A549 (cell line): ENCODE measurements at regions of chr17 and their contacts with region 1.

Region 1: GRCh38 chr17:28227316-28228125 is 91.5 kb upstream of the TMEM97 start:
- DNase-seq: peak; percentile 93 to 94
- ATAC-seq: peak; percentile 88 to 95
- H3K4me3 ChIP-seq: peak overlapping the region; percentile 58
- H3K27ac ChIP-seq: peak overlapping the region; percentile 83 to 84
- H3K4me1 ChIP-seq: peaks cover 14% of the 10 kb centered on the region; the same call in 2 of the 3 replicates
- CTCF ChIP-seq: no peak
- EP300 ChIP-seq: no peak
- POLR2A ChIP-seq: peak; percentile 68
- RAD21 ChIP-seq: no peak; a peak in 1 of 5 replicates

Region 2: DNA sequence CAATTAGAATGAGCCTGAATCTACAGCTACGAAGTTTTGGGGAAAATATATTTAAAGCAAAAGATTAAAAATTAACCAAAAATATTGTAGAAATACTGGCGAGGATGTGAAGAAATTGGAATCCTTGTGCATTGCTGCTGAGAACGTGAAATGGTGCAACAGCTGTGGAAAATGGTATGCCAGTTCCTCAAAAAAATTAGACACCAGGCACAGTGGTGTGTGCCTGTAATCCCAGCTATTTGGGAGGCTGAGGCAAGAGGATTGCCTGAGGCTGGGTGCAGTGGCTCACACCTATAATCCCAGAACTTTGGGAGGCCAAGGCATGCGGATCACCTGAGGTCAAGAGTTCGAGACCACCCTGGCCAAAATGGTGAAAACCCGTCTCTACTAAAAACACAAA is 28.4 kb before region 1 on chr17:
- CTCF ChIA-PET with region 1: no interaction called
- POLR2A ChIA-PET with region 1: no interaction called
- DNase-seq: no peak
- ATAC-seq: no peak
- H3K4me3 ChIP-seq: no peak overlapping the region
- H3K27ac ChIP-seq: no peak overlapping the region
- H3K4me1 ChIP-seq: no peaks in the 10 kb centered on the region
- CTCF ChIP-seq: no peak
- EP300 ChIP-seq: no peak
- POLR2A ChIP-seq: no peak
- RAD21 ChIP-seq: no peak

Region 3: DNA sequence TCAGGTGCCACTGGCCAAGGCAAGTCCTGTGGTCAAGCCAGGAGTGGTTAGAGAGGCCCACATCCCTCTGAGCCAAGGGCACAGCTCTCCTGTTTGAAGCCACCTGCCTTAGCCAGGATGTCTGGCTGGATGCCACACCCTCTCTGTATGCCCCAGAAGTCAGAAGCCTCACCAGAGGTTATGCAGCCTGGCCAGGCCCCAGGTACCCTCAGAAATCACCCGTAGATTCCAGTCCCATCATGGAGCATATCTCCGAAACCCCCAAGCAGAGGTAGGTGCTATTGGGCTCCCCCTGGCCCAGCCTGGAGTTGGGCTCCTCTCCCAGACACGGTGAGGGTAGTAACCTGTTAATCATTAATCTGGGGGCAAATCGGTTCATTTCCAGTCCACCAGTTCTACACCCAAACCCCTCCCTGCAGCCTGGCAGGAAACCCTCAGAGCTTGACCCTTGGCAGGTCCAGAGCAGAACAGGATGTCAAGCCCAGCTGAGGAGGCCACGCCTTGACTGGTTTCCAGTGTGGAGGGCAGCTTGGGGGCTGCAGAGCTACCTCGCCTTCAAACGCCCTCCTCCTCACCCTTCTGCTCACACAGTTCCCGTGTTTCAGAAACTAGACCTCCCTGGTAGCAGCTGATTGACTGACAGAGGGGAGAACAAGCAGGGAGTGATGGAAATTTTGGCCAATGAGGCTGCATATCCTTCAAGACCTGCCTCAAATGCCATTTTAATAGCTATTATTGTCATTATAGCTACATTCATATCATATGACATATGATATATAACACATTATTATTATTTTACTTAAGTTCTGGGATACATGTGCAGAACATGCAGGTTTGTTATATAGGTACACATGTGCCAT is 31.1 kb after region 1 on chr17:
- CTCF ChIA-PET with region 1: interaction called, 338 read pairs
- POLR2A ChIA-PET with region 1: no interaction called
- DNase-seq: peak in 1 of 2 experiments; percentile 36
- ATAC-seq: peak; percentile 35 to 40; a peak in 4 of 6 replicates
- H3K4me3 ChIP-seq: no peak overlapping the region
- H3K27ac ChIP-seq: 0 out of 6 replicates have a peak overlapping the region, but pooled peaks of 1 of the 2 experiments have one; percentile 8
- H3K4me1 ChIP-seq: peaks cover 15% of the 10 kb centered on the region; the same call in 2 of the 3 replicates
- CTCF ChIP-seq: no peak
- EP300 ChIP-seq: no peak
- POLR2A ChIP-seq: no peak
- RAD21 ChIP-seq: no peak

Region 4: DNA sequence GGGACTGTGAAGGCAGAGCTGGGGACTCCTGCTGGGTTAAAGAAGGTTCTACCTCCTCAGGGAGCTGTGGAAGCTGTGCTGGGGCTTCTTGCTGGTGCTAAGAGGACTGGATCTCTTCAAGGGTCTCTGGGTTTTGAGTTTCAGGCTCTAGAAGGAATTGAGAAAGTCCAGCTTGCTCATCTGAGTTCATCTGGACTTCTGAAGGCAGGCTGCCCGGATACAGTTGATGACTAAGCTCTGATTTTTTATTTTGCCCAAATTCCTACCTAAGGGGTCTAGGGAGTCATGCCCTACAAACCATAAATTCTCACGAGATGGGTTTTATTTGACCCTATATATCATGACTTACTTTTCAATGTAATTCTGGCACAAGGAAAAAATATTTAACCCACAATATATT is 44.6 kb after region 1 on chr17:
- CTCF ChIA-PET with region 1: interaction called, 13 read pairs
- POLR2A ChIA-PET with region 1: no interaction called
- DNase-seq: no peak
- ATAC-seq: no peak
- H3K4me3 ChIP-seq: no peak overlapping the region
- H3K27ac ChIP-seq: peak overlapping the region in 1 of 2 experiments; percentile 30; a peak in 1 of 6 replicates
- H3K4me1 ChIP-seq: no peaks in the 10 kb centered on the region
- CTCF ChIP-seq: no peak
- EP300 ChIP-seq: no peak
- POLR2A ChIP-seq: no peak
- RAD21 ChIP-seq: no peak

Region 5: DNA sequence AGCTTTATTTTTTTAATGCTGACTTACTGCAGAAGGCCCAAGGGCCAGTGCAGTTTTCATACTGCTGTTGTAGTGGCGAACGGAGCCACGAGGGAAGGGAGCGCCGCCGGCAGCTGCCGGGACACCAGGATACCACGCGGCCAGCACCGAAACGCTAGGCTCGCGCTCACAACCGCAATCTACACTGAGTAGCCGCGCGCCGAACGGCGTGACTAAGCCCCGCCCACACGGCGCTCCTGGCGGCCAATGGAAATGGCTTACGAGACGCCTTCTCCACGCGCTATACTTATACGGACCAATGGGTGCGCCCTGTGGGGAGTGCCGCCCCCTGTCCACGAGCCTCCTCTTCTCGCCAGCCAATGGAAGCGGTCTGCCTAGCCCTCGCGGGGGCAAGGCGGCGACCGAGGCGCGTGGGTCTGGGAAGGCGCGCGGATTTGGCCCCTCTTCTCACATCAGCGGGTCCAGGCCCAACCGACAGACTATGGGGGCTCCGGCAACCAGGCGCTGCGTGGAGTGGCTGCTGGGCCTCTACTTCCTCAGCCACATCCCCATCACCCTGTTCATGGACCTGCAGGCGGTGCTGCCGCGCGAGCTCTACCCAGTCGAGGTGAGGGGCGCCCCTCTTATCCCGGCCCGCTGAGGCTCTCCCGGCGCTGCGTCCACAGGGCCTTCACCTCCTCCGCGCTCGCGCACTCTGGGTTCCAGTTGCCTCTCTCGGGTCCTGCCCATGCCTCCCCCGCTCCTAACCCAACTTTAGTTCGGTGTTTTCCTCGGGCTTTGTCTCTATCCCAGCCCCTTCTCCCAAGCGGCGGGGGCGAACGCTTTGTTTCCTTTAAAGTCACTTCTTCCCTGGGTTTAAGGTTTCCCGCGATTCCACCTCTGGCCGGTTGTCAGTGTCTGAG is 91.5 kb after region 1 on chr17 and contains the start of gene TMEM97:
- CTCF ChIA-PET with region 1: interaction called, 10 read pairs
- POLR2A ChIA-PET with region 1: no interaction called
- DNase-seq: peak; percentile 98
- ATAC-seq: peak; percentile 97 to 99
- H3K4me3 ChIP-seq: peak within 1 kb of the TSS; percentile 73
- H3K27ac ChIP-seq: peak within 1 kb of the TSS; percentile 76 to 88
- H3K4me1 ChIP-seq: peaks cover 45% of the 10 kb centered on the region
- CTCF ChIP-seq: no peak
- EP300 ChIP-seq: no peak
- POLR2A ChIP-seq: peak; percentile 80
- RAD21 ChIP-seq: no peak; a peak in 3 of 5 replicates
- polyA plus RNA-seq, gene TMEM97: 90.9 and 98.7 TPM in 2 replicates

Region 6: GRCh38 chr17:28327031-28327607 is 99.6 kb after region 1 on chr17:
- CTCF ChIA-PET with region 1: interaction called, 12 read pairs
- POLR2A ChIA-PET with region 1: no interaction called
- DNase-seq: no peak
- ATAC-seq: no peak
- H3K4me3 ChIP-seq: no peak overlapping the region
- H3K27ac ChIP-seq: no peak overlapping the region
- H3K4me1 ChIP-seq: peaks cover 35% of the 10 kb centered on the region
- CTCF ChIP-seq: no peak
- EP300 ChIP-seq: no peak
- POLR2A ChIP-seq: no peak
- RAD21 ChIP-seq: no peak

Region 7: GRCh38 chr17:28335201-28335955 is 107.9 kb after region 1 on chr17 and contains the starts of genes IFT20 and TNFAIP1:
- CTCF ChIA-PET with region 1: interaction called, 12 read pairs
- POLR2A ChIA-PET with region 1: interaction called, 3 read pairs
- DNase-seq: peak; percentile 98 to 100
- ATAC-seq: peak; percentile 91 to 96
- H3K4me3 ChIP-seq: peak within 1 kb of the TSS; percentile 86
- H3K27ac ChIP-seq: peak within 1 kb of the TSS; percentile 87 to 92
- H3K4me1 ChIP-seq: peaks cover 31% of the 10 kb centered on the region
- CTCF ChIP-seq: no peak
- EP300 ChIP-seq: no peak
- POLR2A ChIP-seq: peak; percentile 90
- RAD21 ChIP-seq: no peak; a peak in 1 of 5 replicates
- polyA plus RNA-seq, gene IFT20: 58.7 and 72.1 TPM in 2 replicates
- polyA plus RNA-seq, gene TNFAIP1: 66.2 and 68.3 TPM in 2 replicates